Dorsolateral prefrontal cortex (tissue), 120 donors: ENCODE measurements at regions of chr2 and their contacts with region 1.

Region 1: DNA sequence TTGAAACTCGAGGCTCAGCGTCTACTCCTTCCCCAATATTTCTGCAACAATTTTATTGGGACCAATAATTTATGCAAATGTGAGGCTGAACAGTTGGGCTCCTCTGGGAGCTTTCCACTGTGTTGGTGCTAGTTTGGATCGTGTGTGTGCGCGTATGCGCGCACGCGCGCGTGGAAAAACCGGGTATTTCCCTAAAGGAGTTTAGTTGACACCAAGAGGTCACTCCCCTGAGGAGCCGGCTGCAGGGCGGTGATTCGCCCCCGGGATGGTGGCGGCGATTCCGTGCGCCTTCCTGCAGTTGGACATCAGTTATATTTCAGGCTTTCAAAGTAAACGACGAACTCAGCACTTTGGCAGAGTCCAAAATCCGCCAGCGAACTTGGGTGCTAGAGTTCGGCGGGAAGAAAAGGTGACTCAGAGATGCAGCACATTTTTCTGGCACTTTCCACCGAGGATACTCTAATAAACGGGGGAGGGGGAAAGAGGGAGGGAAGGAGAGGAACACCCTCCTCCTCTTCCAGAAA is 186.5 kb upstream of the FANCL start:
- DNase-seq: peak; percentile 9 to 81 (median 76)
- H3K4me3 ChIP-seq: peak overlapping the region; percentile 30 to 82 (median 66)
- H3K27ac ChIP-seq: peak overlapping the region; percentile 2 to 99 (median 95)
- H3K27me3 ChIP-seq: peaks cover 0 to 4% (median 0%) of the 10 kb centered on the region in 45 donors
- CTCF ChIP-seq: peak in 6 of 56 donors; percentile 15 to 33 (median 20)

Region 2: GRCh38 chr2:58137221-58137620 is 290.4 kb before region 1 on chr2:
- intact Hi-C with region 1: loop called in 1 of 2 experiments (anchors 5 kb)
- DNase-seq: no peak
- H3K4me3 ChIP-seq: no peak overlapping the region
- H3K27ac ChIP-seq: peak overlapping the region in 56 of 59 donors; percentile 3 to 90 (median 75)
- H3K27me3 ChIP-seq: no peaks in the 10 kb centered on the region
- CTCF ChIP-seq: no peak

Region 3: GRCh38 chr2:58291726-58292438 is 135.8 kb before region 1 on chr2:
- intact Hi-C with region 1: loop called in 1 of 2 experiments (anchors 5 kb)
- DNase-seq: no peak
- H3K4me3 ChIP-seq: no peak overlapping the region
- H3K27ac ChIP-seq: peak overlapping the region in 10 of 59 donors; percentile 17 to 78 (median 70)
- H3K27me3 ChIP-seq: no peaks in the 10 kb centered on the region
- CTCF ChIP-seq: no peak

Region 4: DNA sequence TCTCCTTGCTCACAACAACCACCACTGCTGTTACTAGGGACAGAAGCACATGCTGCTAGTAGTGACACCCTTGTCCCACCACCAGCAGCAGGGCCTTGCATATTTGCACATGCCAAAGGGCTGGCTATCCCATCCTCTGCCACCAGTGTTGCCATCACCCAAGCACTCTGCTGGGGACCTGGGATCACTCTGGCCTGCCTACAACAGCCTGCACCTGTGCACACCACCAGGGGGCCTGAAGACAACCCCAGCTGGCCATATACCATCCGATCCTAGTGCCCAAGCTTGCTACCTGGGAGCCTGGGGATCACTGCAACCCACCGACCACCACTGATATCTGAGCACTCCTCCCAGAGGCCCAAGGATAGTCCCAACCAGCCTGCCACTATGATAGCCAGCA is 86.6 kb before region 1 on chr2:
- intact Hi-C with region 1: no loop called
- DNase-seq: no peak
- H3K4me3 ChIP-seq: no peak overlapping the region
- H3K27ac ChIP-seq: no peak overlapping the region
- H3K27me3 ChIP-seq: no peaks in the 10 kb centered on the region
- CTCF ChIP-seq: no peak

Region 5: DNA sequence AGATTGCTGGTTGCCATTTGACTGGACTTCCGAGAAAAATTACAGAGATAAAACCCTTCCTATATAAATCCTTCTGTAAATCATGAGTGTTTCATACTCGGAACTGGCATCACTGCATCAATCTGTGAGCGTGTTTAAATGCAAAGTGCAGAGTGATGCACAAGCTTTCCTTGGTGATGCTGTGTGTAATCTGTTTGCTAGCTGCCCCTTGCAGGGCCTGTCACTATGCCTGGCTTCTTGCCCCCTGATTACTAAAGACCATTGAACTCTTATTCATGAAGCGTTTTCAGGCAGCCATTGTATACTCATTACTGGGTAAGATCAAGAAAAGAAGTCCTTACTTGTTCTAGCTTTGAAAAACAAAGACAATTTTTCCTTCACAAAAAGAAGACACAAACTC is 80.4 kb after region 1 on chr2:
- intact Hi-C with region 1: no loop called
- DNase-seq: peak in 2 of 10 donors; percentile 23 to 45
- H3K4me3 ChIP-seq: peak overlapping the region in 15 of 59 donors; percentile 1 to 31 (median 11)
- H3K27ac ChIP-seq: peak overlapping the region in 53 of 59 donors; percentile 3 to 85 (median 59)
- H3K27me3 ChIP-seq: no peaks in the 10 kb centered on the region
- CTCF ChIP-seq: no peak